ENCODE measurements at regions of chr9 and their contacts with region 1.

Region 1: GRCh38 chr9:83334320-83334719 is 203.9 kb downstream of the FRMD3 start:
- DNase-seq: peak; percentile 67 to 80
- H3K4me3 ChIP-seq: no peak overlapping the region
- H3K27ac ChIP-seq: no peak overlapping the region; the same call in 1 of the 2 replicates
- H3K4me1 ChIP-seq: peaks cover 13% of the 10 kb centered on the region; the same call in 1 of the 2 replicates
- H3K27me3 ChIP-seq: no peaks in the 10 kb centered on the region
- CTCF ChIP-seq: peak; percentile 93

Region 2: GRCh38 chr9:83199243-83199642 is 135.1 kb before region 1 on chr9:
- CTCF ChIA-PET with region 1: interaction called, 3 read pairs
- POLR2A ChIA-PET with region 1: no interaction called
- intact Hi-C with region 1: loop called (anchors 1 kb)
- DNase-seq: peak; percentile 34 to 47
- H3K4me3 ChIP-seq: no peak overlapping the region
- H3K27ac ChIP-seq: no peak overlapping the region
- H3K4me1 ChIP-seq: no peaks in the 10 kb centered on the region
- H3K27me3 ChIP-seq: no peaks in the 10 kb centered on the region
- CTCF ChIP-seq: peak; percentile 77

Region 3: DNA sequence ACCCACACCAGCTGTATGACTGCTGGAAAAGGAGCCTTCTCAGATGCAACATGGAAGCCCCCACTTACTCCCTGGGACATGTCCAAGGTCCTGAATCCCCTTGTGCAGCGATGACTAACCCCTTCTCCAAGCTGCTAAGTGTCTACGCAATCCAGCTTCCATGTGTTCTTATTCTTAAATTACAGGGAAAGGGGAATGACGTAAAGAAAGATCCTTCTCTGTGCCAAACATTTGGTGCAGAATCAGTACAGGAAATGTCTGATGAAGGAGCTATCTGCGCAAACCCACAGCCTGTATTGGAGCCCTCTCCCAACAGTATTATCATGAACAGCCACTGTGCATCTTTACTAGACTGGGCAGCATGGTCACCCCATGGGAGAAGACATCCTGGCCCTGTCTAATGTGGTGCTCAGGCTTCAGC is 20.7 kb after region 1 on chr9:
- CTCF ChIA-PET with region 1: no interaction called
- POLR2A ChIA-PET with region 1: no interaction called
- intact Hi-C with region 1: no loop called
- DNase-seq: no peak
- H3K4me3 ChIP-seq: no peak overlapping the region
- H3K27ac ChIP-seq: no peak overlapping the region
- H3K4me1 ChIP-seq: no peaks in the 10 kb centered on the region
- H3K27me3 ChIP-seq: no peaks in the 10 kb centered on the region
- CTCF ChIP-seq: no peak

Region 4: GRCh38 chr9:83538172-83538889 is 204.0 kb after region 1 on chr9 and contains the start of gene FRMD3:
- CTCF ChIA-PET with region 1: interaction called, 20 read pairs
- POLR2A ChIA-PET with region 1: no interaction called
- intact Hi-C with region 1: loop called (anchors 1 kb)
- DNase-seq: peak; percentile 72 to 88
- H3K4me3 ChIP-seq: peak within 1 kb of the TSS; percentile 69
- H3K27ac ChIP-seq: no peak within 1 kb of the TSS
- H3K4me1 ChIP-seq: peaks cover 7% of the 10 kb centered on the region; the same call in 1 of the 2 replicates
- H3K27me3 ChIP-seq: no peaks in the 10 kb centered on the region
- CTCF ChIP-seq: peak; percentile 80
- total RNA-seq, gene FRMD3: 1.4 and 1.9 TPM in 2 replicates

Region 5: GRCh38 chr9:83583151-83584014 is 249.1 kb after region 1 on chr9:
- CTCF ChIA-PET with region 1: no interaction called
- POLR2A ChIA-PET with region 1: no interaction called
- intact Hi-C with region 1: loop called (anchors 5 kb)
- DNase-seq: peak in 1 of 2 experiments; percentile 29
- H3K4me3 ChIP-seq: no peak overlapping the region
- H3K27ac ChIP-seq: no peak overlapping the region
- H3K4me1 ChIP-seq: no peaks in the 10 kb centered on the region; the same call in 1 of the 2 replicates
- H3K27me3 ChIP-seq: no peaks in the 10 kb centered on the region
- CTCF ChIP-seq: peak; percentile 74

Region 6: DNA sequence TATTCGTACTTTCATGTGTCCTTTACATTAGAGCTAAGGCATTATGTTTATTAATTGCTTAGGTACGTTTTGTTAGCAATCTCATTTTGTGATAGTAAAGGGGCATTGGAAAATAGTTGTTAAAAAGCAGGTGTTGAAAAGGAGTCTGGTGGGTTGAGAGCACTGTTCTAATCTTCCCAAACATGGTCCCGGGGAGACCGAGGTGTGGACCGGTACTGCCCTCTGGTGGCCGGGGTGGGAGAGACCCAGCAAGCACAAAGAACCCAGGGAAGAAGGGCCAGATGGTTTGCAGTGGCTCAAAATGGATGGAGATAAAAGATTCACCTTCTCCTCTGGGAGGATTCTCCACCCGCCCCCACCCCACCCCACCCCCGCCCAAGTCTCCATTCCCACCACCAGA is 314.8 kb after region 1 on chr9:
- CTCF ChIA-PET with region 1: no interaction called
- POLR2A ChIA-PET with region 1: no interaction called
- intact Hi-C with region 1: loop called (anchors 1 kb)
- DNase-seq: peak in 1 of 2 experiments; percentile 65
- H3K4me3 ChIP-seq: no peak overlapping the region
- H3K27ac ChIP-seq: no peak overlapping the region
- H3K4me1 ChIP-seq: no peaks in the 10 kb centered on the region
- H3K27me3 ChIP-seq: no peaks in the 10 kb centered on the region
- CTCF ChIP-seq: peak; percentile 78

Measured in PC-9 (cell line).